ENCODE measurements at regions of chr12 and their contacts with region 1.

Region 1: GRCh38 chr12:75526655-75527511 is 15.5 kb upstream of the KRR1 start:
- DNase-seq: peak; percentile 30
- ATAC-seq: peak; percentile 87
- H3K4me3 Mint-ChIP-seq: no peak overlapping the region
- H3K27ac Mint-ChIP-seq: no peak overlapping the region
- H3K4me1 Mint-ChIP-seq: peaks cover 7% of the 10 kb centered on the region
- H3K27me3 Mint-ChIP-seq: peaks cover 22% of the 10 kb centered on the region

Region 2: DNA sequence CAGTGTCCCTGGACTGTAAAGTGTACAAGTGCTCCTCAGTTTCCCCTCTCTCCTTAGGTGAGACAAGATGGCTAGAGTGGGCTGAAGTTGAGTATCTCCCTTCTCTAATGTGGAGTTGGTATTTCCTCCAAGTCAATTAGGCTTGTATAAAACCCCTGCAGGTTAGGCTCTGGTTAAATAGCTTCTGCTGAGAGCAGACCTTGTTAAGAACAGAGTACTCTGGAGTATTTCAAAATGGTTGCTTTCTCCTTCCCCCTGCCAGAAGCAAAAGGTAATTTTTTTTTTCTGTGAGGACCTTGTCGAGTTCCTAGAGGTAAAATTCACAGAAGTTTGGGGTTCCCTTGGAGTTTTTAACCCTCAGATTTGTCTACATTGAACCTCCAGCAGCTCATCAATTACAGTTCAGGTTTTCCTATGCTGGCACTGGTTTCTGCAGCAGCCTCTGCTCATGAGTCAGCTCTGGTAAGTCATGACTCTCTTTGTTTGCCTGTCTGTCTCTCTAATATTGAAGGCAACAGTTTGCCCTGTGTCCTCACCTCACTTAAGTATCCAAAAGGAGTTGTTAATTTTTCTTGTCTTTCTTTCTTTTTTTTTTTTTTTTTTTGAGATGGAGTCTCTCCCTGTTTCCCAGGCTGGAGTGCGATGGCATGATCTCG is 74.1 kb before region 1 on chr12:
- CTCF ChIA-PET with region 1: no interaction called
- POLR2A ChIA-PET with region 1: no interaction called
- DNase-seq: no peak
- ATAC-seq: no peak
- H3K4me3 Mint-ChIP-seq: no peak overlapping the region
- H3K27ac Mint-ChIP-seq: no peak overlapping the region
- H3K4me1 Mint-ChIP-seq: peaks cover 18% of the 10 kb centered on the region
- H3K27me3 Mint-ChIP-seq: peaks cover 2% of the 10 kb centered on the region

Region 3: DNA sequence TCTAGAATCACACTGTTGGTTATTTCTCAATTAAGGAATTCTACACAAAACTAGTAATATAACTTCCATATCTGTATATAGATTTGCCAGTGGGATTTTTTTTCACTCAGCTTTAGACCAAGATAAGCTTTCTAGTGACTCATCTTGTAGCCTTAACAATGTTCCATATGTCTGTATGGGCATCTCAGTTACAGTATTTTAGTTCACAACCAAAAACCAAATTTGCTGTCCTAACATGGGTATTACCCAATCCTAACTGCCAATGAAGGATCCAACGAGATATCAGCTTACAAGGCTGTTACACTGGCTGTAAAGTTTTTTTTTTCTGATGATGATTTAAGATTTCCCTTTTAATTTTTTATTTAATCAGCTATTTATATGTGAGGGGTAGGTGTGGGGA is 16.1 kb after region 1 on chr12:
- CTCF ChIA-PET with region 1: interaction called, 15 read pairs
- POLR2A ChIA-PET with region 1: no interaction called
- DNase-seq: no peak
- ATAC-seq: no peak
- H3K4me3 Mint-ChIP-seq: no peak overlapping the region
- H3K27ac Mint-ChIP-seq: no peak overlapping the region
- H3K4me1 Mint-ChIP-seq: no peaks in the 10 kb centered on the region
- H3K27me3 Mint-ChIP-seq: peaks cover 43% of the 10 kb centered on the region

Region 4: DNA sequence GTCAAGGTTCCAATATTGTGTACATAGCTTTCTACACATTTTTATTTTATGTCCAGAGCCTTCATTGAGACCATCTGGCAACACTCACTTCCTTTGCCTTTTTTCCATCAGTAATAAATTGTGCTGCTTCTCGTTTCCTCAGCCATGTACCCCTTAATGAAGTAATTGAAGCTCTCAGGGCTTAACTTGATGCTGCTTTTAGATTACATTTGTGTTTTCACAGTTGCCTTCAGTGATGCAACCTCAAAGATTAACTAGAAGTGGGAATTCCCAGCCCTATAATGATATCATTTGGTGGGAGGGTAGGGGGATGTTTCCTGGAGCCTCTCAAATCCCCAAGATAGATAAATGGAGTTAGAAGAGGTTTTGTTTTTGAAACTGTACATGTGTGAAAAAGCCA is 64.7 kb after region 1 on chr12:
- CTCF ChIA-PET with region 1: no interaction called
- POLR2A ChIA-PET with region 1: no interaction called
- DNase-seq: no peak
- ATAC-seq: no peak
- H3K4me3 Mint-ChIP-seq: no peak overlapping the region
- H3K27ac Mint-ChIP-seq: no peak overlapping the region
- H3K4me1 Mint-ChIP-seq: peaks cover 2% of the 10 kb centered on the region
- H3K27me3 Mint-ChIP-seq: peaks cover 26% of the 10 kb centered on the region